ENCODE measurements at regions of chr7 and their contacts with region 1.

Region 1: GRCh38 chr7:99235925-99236324 is 28.0 kb upstream of the KPNA7 start:
- DNase-seq: no peak
- ATAC-seq: no peak
- H3K4me3 ChIP-seq: no peak overlapping the region
- H3K4me3 Mint-ChIP-seq: no peak overlapping the region
- H3K27ac ChIP-seq: no peak overlapping the region
- H3K27ac Mint-ChIP-seq: no peak overlapping the region
- H3K4me1 ChIP-seq: no peaks in the 10 kb centered on the region
- H3K4me1 Mint-ChIP-seq: no peaks in the 10 kb centered on the region
- H3K27me3 ChIP-seq: no peaks in the 10 kb centered on the region
- H3K27me3 Mint-ChIP-seq: peaks cover 8% of the 10 kb centered on the region
- CTCF ChIP-seq: no peak

Region 2: GRCh38 chr7:99040104-99040958 is 195.6 kb before region 1 on chr7:
- CTCF ChIA-PET with region 1: no interaction called
- POLR2A ChIA-PET with region 1: no interaction called
- intact Hi-C with region 1: loop called (anchors 5 to 10 kb)
- DNase-seq: peak; percentile 14 to 79 (median 65)
- ATAC-seq: peak; percentile 79
- H3K4me3 ChIP-seq: no peak overlapping the region
- H3K4me3 Mint-ChIP-seq: no peak overlapping the region
- H3K27ac ChIP-seq: no peak overlapping the region
- H3K27ac Mint-ChIP-seq: no peak overlapping the region
- H3K4me1 ChIP-seq: no peaks in the 10 kb centered on the region
- H3K4me1 Mint-ChIP-seq: no peaks in the 10 kb centered on the region
- H3K27me3 ChIP-seq: no peaks in the 10 kb centered on the region
- H3K27me3 Mint-ChIP-seq: no peaks in the 10 kb centered on the region
- CTCF ChIP-seq: peak; percentile 76

Region 3: GRCh38 chr7:101058355-101058754 is 1822.4 kb after region 1 on chr7:
- CTCF ChIA-PET with region 1: no interaction called
- POLR2A ChIA-PET with region 1: no interaction called
- intact Hi-C with region 1: no loop called
- DNase-seq: peak in 8 of 9 experiments; percentile 24 to 66 (median 58)
- ATAC-seq: no peak
- H3K4me3 ChIP-seq: no peak overlapping the region
- H3K4me3 Mint-ChIP-seq: no peak overlapping the region
- H3K27ac ChIP-seq: no peak overlapping the region
- H3K27ac Mint-ChIP-seq: no peak overlapping the region
- H3K4me1 ChIP-seq: no peaks in the 10 kb centered on the region
- H3K4me1 Mint-ChIP-seq: no peaks in the 10 kb centered on the region
- H3K27me3 ChIP-seq: peaks cover 0 to 19% of the 10 kb centered on the region in 2 experiments
- H3K27me3 Mint-ChIP-seq: peaks cover 41% of the 10 kb centered on the region
- CTCF ChIP-seq: no peak

Measured in CD8-positive, alpha-beta T cell (primary cell).